Activated CD8-positive, alpha-beta T cell treated with anti-CD3 and anti-CD28 coated beads for 36 hours (primary cell): ENCODE measurements at regions of chr1 and their contacts with region 1.

Region 1: GRCh38 chr1:198258491-198258890 is 101.7 kb downstream of the NEK7 start:
- DNase-seq: no peak
- ATAC-seq: peak; percentile 72
- H3K4me3 Mint-ChIP-seq: peak overlapping the region; percentile 33
- H3K27ac Mint-ChIP-seq: peak overlapping the region; percentile 94
- H3K4me1 Mint-ChIP-seq: peaks cover 75% of the 10 kb centered on the region
- H3K27me3 Mint-ChIP-seq: no peaks in the 10 kb centered on the region
- CTCF ChIP-seq: no peak

Region 2: DNA sequence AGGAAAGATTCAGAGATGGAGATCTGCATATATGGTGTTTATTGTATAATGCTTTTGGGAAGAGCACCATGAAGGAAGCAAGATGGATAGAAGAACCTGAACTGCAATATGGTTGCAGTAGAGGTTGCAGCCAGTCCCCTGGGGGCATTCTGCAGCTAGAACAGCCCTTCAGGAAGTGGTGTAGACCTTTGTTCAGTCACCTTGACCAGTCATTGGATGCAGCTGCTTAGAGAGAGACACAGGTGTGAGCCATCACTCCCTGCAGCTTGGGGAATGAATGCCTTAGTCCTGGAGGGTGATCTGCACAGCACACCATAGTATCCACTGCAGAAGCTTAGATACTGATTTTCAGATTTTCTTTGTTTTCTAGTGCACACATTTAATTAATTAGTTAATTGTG is 59.4 kb before region 1 on chr1:
- CTCF ChIA-PET with region 1: interaction called, 3 read pairs
- POLR2A ChIA-PET with region 1: interaction called, 12 read pairs
- intact Hi-C with region 1: no loop called
- DNase-seq: no peak
- ATAC-seq: peak; percentile 21
- H3K4me3 Mint-ChIP-seq: no peak overlapping the region
- H3K27ac Mint-ChIP-seq: no peak overlapping the region
- H3K4me1 Mint-ChIP-seq: peaks cover 80% of the 10 kb centered on the region
- H3K27me3 Mint-ChIP-seq: no peaks in the 10 kb centered on the region
- CTCF ChIP-seq: no peak

Region 3: GRCh38 chr1:198220428-198220827 is 38.1 kb before region 1 on chr1:
- CTCF ChIA-PET with region 1: no interaction called
- POLR2A ChIA-PET with region 1: no interaction called
- intact Hi-C with region 1: no loop called
- DNase-seq: no peak
- ATAC-seq: no peak
- H3K4me3 Mint-ChIP-seq: no peak overlapping the region
- H3K27ac Mint-ChIP-seq: no peak overlapping the region
- H3K4me1 Mint-ChIP-seq: peaks cover 33% of the 10 kb centered on the region
- H3K27me3 Mint-ChIP-seq: no peaks in the 10 kb centered on the region
- CTCF ChIP-seq: no peak

Region 4: DNA sequence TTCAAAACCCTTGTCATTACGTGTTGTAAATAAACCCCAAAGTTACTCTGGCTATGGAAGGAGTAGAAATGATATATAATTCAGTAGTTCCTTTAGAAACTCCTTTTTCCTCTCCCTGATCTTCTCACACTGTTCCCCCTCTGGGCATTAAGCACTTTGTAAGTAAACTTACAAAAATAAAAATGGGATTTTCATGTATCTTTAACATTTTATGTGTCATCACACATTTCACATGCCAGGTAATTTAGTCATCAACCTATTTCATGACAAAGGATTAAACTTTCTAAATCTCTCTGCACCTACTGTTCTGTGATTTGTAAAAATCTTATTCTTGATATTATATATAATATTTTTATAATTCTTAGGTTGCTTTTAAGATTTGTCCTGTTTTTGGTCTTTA is 75.3 kb after region 1 on chr1:
- CTCF ChIA-PET with region 1: no interaction called
- POLR2A ChIA-PET with region 1: no interaction called
- intact Hi-C with region 1: no loop called
- DNase-seq: no peak
- ATAC-seq: no peak
- H3K4me3 Mint-ChIP-seq: no peak overlapping the region
- H3K27ac Mint-ChIP-seq: no peak overlapping the region
- H3K4me1 Mint-ChIP-seq: no peaks in the 10 kb centered on the region
- H3K27me3 Mint-ChIP-seq: peaks cover 6% of the 10 kb centered on the region
- CTCF ChIP-seq: no peak